ENCODE measurements at regions of chr10 and their contacts with region 1.

Region 1: GRCh38 chr10:128843972-128844371 is 623.1 kb upstream of the MGMT start:
- DNase-seq: no peak
- ATAC-seq: no peak
- H3K4me3 ChIP-seq: no peak overlapping the region
- H3K27ac ChIP-seq: no peak overlapping the region
- H3K4me1 ChIP-seq: no peaks in the 10 kb centered on the region
- H3K27me3 ChIP-seq: no peaks in the 10 kb centered on the region
- CTCF ChIP-seq: no peak
- EP300 ChIP-seq: no peak
- POLR2A ChIP-seq: no peak
- RAD21 ChIP-seq: no peak

Region 2: GRCh38 chr10:128530301-128530700 is 313.7 kb before region 1 on chr10:
- CTCF ChIA-PET with region 1: no interaction called
- POLR2A ChIA-PET with region 1: no interaction called
- RAD21 ChIA-PET with region 1: no interaction called
- SMC1A ChIA-PET with region 1: no interaction called
- in situ Hi-C with region 1: no loop called
- intact Hi-C with region 1: no loop called
- DNase-seq: no peak
- ATAC-seq: no peak
- H3K4me3 ChIP-seq: no peak overlapping the region
- H3K27ac ChIP-seq: no peak overlapping the region
- H3K4me1 ChIP-seq: no peaks in the 10 kb centered on the region
- H3K27me3 ChIP-seq: peaks cover 0 to 3% of the 10 kb centered on the region in 2 experiments; a peak in 2 of 4 replicates
- CTCF ChIP-seq: peak; percentile 24 to 45 (median 43); a peak in 4 of 6 replicates
- EP300 ChIP-seq: no peak
- POLR2A ChIP-seq: no peak
- RAD21 ChIP-seq: peak; percentile 27; the same call in 1 of the 2 replicates

Region 3: DNA sequence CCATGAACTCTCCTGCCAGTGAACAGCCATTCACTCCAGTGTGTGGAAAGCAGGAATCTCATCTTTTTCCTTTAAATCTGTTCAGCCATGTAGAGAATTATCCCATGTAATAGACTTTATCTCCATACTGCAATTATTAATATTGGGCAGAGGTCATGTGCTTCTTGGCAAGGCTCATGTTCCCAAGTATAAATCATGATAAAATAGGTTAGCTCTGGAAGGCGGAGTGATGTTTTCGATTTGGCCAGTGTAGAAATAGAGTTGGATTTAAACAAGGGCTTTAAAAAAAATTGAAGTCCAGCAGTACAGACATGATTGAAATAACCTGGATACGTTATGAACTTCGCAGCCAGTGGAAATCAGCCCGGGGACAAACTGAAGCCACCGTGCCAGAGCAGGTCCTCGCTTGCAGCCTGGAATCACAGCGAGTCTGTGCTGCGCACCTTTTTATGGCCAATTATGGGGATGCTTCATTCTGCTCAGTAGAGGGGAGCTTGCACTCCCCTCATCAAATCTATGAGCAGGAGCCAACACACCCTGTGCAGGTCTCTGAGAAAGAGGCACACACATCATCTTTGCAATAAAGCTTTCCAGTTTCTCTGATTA is 63.7 kb before region 1 on chr10:
- CTCF ChIA-PET with region 1: no interaction called
- POLR2A ChIA-PET with region 1: no interaction called
- RAD21 ChIA-PET with region 1: no interaction called
- SMC1A ChIA-PET with region 1: no interaction called
- in situ Hi-C with region 1: no loop called
- intact Hi-C with region 1: loop called (anchors 10 kb)
- DNase-seq: no peak
- ATAC-seq: no peak
- H3K4me3 ChIP-seq: no peak overlapping the region
- H3K27ac ChIP-seq: no peak overlapping the region
- H3K4me1 ChIP-seq: no peaks in the 10 kb centered on the region
- H3K27me3 ChIP-seq: no peaks in the 10 kb centered on the region
- CTCF ChIP-seq: no peak
- EP300 ChIP-seq: no peak
- POLR2A ChIP-seq: no peak
- RAD21 ChIP-seq: no peak

Region 4: GRCh38 chr10:128814782-128815181 is 29.2 kb before region 1 on chr10:
- CTCF ChIA-PET with region 1: no interaction called
- POLR2A ChIA-PET with region 1: no interaction called
- RAD21 ChIA-PET with region 1: no interaction called
- SMC1A ChIA-PET with region 1: no interaction called
- in situ Hi-C with region 1: no loop called
- intact Hi-C with region 1: no loop called
- DNase-seq: no peak
- ATAC-seq: no peak
- H3K4me3 ChIP-seq: no peak overlapping the region
- H3K27ac ChIP-seq: no peak overlapping the region
- H3K4me1 ChIP-seq: no peaks in the 10 kb centered on the region
- H3K27me3 ChIP-seq: no peaks in the 10 kb centered on the region
- CTCF ChIP-seq: no peak
- EP300 ChIP-seq: no peak
- POLR2A ChIP-seq: no peak
- RAD21 ChIP-seq: no peak

Measured in GM12878 (cell line).